Posterior vena cava (tissue), 2 donors: ENCODE measurements at regions of chr6 and their contacts with region 1.

Region 1: GRCh38 chr6:6984585-6985366 is 123.0 kb upstream of the RREB1 start:
- DNase-seq: no peak

Region 2: DNA sequence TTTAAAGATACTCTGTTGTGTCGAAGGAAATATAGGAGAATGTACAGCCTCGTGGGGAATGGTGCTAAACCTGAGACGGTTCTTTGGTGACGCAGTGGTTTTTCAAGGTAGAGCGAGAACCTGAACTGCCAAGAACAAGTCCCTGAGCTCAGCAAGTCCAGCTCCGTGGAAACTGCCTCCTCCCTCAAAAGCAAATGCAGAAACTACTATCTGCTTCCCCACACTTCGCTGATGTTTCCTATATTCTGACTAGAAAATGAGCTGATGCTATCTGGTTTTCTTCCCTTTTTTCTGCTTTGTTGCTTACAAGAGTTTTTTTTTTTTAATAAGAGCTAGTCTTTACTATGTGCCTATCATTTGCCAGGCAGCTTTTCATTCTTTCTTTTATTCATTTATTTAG is 481.6 kb before region 1 on chr6:
- intact Hi-C with region 1: loop called in 1 of 2 experiments (anchors 5 kb)
- DNase-seq: no peak